H1 (cell line): ENCODE measurements at regions of chr1 and their contacts with region 1.

Region 1: GRCh38 chr1:26431979-26432695 is at the start of gene DHDDS:
- DNase-seq: peak; percentile 95 to 99
- H3K4me3 ChIP-seq: peak within 1 kb of the TSS; percentile 62 to 86 (median 83)
- H3K27ac ChIP-seq: peak within 1 kb of the TSS; percentile 53
- H3K4me1 ChIP-seq: peaks cover 2 to 8% (median 5%) of the 10 kb centered on the region in 4 experiments; a peak in 6 of 7 replicates
- H3K27me3 ChIP-seq: no peaks in the 10 kb centered on the region
- CTCF ChIP-seq: no peak
- EP300 ChIP-seq: peak in 1 of 2 experiments; percentile 90; a peak in 2 of 3 replicates
- POLR2A ChIP-seq: peak; percentile 38 to 42; a peak in 2 of 3 replicates
- RAD21 ChIP-seq: no peak
- total RNA-seq, gene DHDDS: 44.6 and 48.0 TPM in 2 replicates

Region 2: DNA sequence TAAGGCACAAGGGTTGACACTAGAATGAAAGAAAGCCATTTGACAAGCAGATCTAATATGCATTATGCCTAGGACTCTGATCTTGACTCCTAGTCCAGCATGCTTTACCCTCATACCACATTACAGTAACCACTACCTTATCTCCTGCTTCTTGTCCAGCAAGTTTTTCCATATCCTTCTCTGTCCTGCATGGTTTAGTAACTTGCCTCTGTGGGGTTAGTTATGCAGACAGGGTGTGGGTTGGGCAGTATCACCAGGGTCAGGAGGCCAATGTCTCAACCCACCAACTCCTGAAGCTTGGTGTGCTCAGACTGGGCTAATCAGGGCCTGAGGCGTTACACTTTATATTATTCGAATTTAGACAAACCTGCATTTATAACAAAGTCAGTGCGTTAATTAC is 18.8 kb after region 1 on chr1:
- CTCF ChIA-PET with region 1: interaction called, 5 read pairs
- POLR2A ChIA-PET with region 1: interaction called, 25 read pairs
- DNase-seq: no peak
- H3K4me3 ChIP-seq: no peak overlapping the region
- H3K27ac ChIP-seq: no peak overlapping the region
- H3K4me1 ChIP-seq: no peaks in the 10 kb centered on the region
- H3K27me3 ChIP-seq: no peaks in the 10 kb centered on the region
- CTCF ChIP-seq: no peak
- EP300 ChIP-seq: no peak
- POLR2A ChIP-seq: no peak
- RAD21 ChIP-seq: no peak